ENCODE measurements at regions of chr3 and their contacts with region 1.

Region 1: GRCh38 chr3:122680475-122681283 is at the start of gene PARP14:
- DNase-seq: peak; percentile 64
- H3K4me3 ChIP-seq: peak within 1 kb of the TSS; percentile 88 to 90
- H3K27ac ChIP-seq: peak within 1 kb of the TSS; percentile 96 to 97
- H3K4me1 ChIP-seq: peaks cover 24% of the 10 kb centered on the region
- H3K27me3 ChIP-seq: no peaks in the 10 kb centered on the region
- CTCF ChIP-seq: no peak
- POLR2A ChIP-seq: no peak
- total RNA-seq, gene PARP14: 11.3 to 18.2 TPM

Region 2: DNA sequence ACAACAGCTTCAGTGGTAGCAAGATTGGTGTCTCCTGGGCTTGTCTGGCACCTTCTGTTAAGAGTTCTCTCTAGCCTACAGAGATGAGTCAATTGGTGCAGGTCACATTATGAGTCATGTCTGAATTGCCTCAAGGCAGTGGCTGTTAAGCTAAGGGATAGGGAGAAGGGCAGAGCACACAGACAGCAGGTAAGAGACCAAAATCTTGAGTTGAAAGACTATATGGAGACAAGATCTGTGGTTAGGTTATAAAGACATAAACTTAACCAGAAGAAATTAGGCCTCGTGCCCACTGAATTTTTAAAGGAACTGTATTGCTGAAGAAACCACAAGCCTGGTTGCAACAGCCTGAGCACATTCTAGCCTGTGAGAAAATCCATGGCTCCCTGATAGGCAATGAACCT is 146.7 kb before region 1 on chr3:
- intact Hi-C with region 1: no loop called
- DNase-seq: no peak
- H3K4me3 ChIP-seq: no peak overlapping the region
- H3K27ac ChIP-seq: no peak overlapping the region
- H3K4me1 ChIP-seq: no peaks in the 10 kb centered on the region
- H3K27me3 ChIP-seq: no peaks in the 10 kb centered on the region
- CTCF ChIP-seq: no peak
- POLR2A ChIP-seq: no peak

Region 3: DNA sequence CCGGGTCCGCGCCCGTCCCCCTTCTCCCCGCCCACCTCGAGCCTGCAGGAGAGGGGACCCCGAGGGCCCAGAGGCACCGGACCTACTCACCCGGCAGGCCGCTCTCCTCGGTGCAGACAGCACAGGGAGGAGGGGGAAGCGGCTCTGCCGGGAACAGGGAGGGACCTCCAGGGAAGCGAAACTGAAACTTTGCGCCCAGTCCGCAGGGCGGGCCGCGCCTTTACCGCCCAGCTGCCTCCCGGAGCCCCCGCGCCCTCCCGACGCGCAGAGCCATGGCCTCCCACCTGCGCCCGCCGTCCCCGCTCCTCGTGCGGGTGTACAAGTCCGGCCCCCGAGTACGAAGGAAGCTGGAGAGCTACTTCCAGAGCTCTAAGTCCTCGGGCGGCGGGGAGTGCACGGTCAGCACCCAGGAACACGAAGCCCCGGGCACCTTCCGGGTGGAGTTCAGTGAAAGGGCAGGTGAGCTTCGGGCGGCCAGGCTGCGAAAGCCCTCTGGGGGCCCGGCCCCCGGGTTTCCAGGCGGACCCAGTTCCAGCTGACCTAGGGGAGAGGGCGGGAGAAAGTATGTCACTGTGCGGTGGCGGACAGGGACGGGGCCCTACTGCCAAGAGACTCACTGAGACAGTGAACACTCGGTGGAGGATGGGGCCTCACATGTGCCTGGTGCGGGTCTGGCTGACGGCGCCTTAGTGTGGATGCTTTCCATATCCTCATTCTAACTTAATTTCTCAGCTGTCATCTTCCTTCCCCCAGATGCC is 116.3 kb before region 1 on chr3 and contains the starts of genes DTX3L and PARP9:
- intact Hi-C with region 1: loop called (anchors 5 kb)
- DNase-seq: peak; percentile 85
- H3K4me3 ChIP-seq: peak within 1 kb of the TSS; percentile 64 to 84
- H3K27ac ChIP-seq: peak within 1 kb of the TSS; percentile 94 to 95
- H3K4me1 ChIP-seq: peaks cover 4% of the 10 kb centered on the region
- H3K27me3 ChIP-seq: no peaks in the 10 kb centered on the region
- CTCF ChIP-seq: no peak
- POLR2A ChIP-seq: no peak
- total RNA-seq, gene DTX3L: 8.3 to 8.7 TPM
- total RNA-seq, gene PARP9: 12.8 to 13.8 TPM

Region 4: DNA sequence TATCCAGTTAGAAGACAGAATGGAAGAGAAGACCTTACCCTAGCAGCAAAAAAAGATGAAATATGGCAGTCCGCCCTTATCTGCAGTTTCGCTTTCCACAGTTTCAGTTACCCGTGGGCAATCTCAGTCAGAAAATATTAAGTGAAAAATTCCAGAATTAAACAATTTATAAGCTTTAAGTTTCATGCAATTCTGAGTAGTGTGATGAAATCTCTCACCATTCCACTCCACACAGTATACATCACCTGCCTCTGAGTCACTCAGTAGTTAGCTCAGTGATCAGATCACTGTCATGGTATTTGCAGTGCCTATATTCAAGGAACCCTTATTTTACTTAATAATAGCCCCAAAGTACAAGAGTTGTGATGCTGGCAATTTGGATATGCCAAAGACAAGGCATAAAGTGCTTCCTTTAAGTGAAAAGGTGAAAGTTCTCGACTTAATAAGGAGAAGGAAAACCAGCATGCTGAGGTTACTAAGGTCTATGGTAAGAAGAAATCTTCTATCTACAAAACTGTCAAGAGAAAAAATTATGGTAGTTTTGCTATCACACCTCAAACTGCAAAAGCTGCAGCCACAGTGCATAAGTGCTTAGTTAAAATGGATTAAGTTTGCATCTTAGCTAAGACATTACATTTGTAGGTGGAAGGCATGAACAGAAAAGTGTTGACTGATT is 64.8 kb after region 1 on chr3:
- intact Hi-C with region 1: no loop called
- DNase-seq: no peak
- H3K4me3 ChIP-seq: no peak overlapping the region
- H3K27ac ChIP-seq: no peak overlapping the region
- H3K4me1 ChIP-seq: no peaks in the 10 kb centered on the region
- H3K27me3 ChIP-seq: no peaks in the 10 kb centered on the region
- CTCF ChIP-seq: no peak
- POLR2A ChIP-seq: no peak